ENCODE measurements at regions of chr11 and their contacts with region 1.

Region 1: DNA sequence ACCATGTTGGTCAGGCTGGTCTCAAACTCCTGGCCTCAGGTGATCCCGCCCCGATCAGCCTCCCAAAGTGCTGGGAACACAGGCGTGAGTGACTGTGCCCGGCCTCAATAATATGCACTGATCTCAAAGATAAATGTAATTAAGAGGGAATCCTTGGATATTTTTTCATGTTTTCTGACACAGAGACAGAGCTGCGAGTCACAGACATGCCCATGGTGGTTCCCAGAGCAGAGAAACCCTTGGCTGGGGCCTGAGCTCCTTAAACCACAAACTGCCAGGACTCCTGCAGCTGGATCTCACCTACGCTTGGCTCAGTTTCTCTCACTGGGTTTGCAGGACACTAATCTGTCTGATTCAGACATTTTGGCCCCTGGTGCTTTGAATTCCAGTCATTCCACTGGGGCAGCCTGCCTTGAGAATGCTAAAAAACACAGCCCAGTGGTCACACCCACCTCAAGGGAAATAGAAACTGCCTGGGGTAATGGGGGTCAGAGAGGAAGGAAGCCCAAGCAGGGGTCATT is 122.6 kb downstream of the CCDC81 start:
- DNase-seq: no peak
- CTCF ChIP-seq: no peak

Region 2: GRCh38 chr11:86483940-86484794 is 13.1 kb before region 1 on chr11:
- CTCF ChIA-PET with region 1: interaction called, 14 read pairs
- POLR2A ChIA-PET with region 1: no interaction called
- DNase-seq: no peak
- CTCF ChIP-seq: no peak

Region 3: GRCh38 chr11:86688398-86689179 is 191.3 kb after region 1 on chr11:
- CTCF ChIA-PET with region 1: no interaction called
- POLR2A ChIA-PET with region 1: no interaction called
- DNase-seq: peak; percentile 20
- CTCF ChIP-seq: no peak

Measured in GM10248 (cell line).